ENCODE measurements at regions of chr6 and their contacts with region 1.

Region 1: DNA sequence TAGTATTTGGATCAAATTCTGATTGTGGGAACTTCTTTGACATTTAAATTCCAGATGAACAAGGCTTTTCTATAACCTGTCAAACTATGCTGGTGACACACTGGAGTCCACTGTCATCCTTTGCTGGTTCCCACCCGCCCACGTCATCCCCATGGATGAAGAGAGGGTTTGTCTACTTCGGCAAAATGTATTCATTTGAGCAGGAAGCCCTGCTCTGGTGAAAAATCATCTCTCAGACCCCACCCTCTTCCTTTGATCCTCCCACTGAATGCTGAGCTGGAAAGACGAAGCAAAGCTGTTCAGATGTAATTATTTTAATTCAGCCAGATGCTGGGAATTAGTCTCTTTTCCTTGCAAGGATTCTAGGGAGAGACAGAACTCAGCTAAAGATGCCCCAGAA is 50.5 kb downstream of the CPNE5 start:
- DNase-seq: peak in 1 of 2 donors; percentile 21
- ATAC-seq: no peak
- H3K4me3 ChIP-seq: no peak overlapping the region
- H3K4me3 Mint-ChIP-seq: no peak overlapping the region
- H3K27ac ChIP-seq: no peak overlapping the region
- H3K27ac Mint-ChIP-seq: no peak overlapping the region
- H3K4me1 ChIP-seq: no peaks in the 10 kb centered on the region
- H3K4me1 Mint-ChIP-seq: no peaks in the 10 kb centered on the region
- H3K27me3 ChIP-seq: no peaks in the 10 kb centered on the region
- H3K27me3 Mint-ChIP-seq: peaks cover 6 to 8% of the 10 kb centered on the region in 2 donors
- CTCF ChIP-seq: no peak

Region 2: GRCh38 chr6:36615018-36615761 is 173.6 kb before region 1 on chr6:
- intact Hi-C with region 1: loop called (anchors 10 kb)
- DNase-seq: peak; percentile 34 to 80
- ATAC-seq: peak; percentile 76 to 92 (median 85)
- H3K4me3 ChIP-seq: no peak overlapping the region
- H3K4me3 Mint-ChIP-seq: no peak overlapping the region
- H3K27ac ChIP-seq: peak overlapping the region; percentile 53
- H3K27ac Mint-ChIP-seq: peak overlapping the region; percentile 74 to 88
- H3K4me1 ChIP-seq: peaks cover 14% of the 10 kb centered on the region
- H3K4me1 Mint-ChIP-seq: peaks cover 15 to 22% of the 10 kb centered on the region in 2 donors
- H3K27me3 ChIP-seq: no peaks in the 10 kb centered on the region
- H3K27me3 Mint-ChIP-seq: no peaks in the 10 kb centered on the region
- CTCF ChIP-seq: peak; percentile 75

Region 3: GRCh38 chr6:36858407-36858981 is 69.7 kb after region 1 on chr6:
- intact Hi-C with region 1: no loop called
- DNase-seq: no peak
- ATAC-seq: no peak
- H3K4me3 ChIP-seq: no peak overlapping the region
- H3K4me3 Mint-ChIP-seq: no peak overlapping the region
- H3K27ac ChIP-seq: no peak overlapping the region
- H3K27ac Mint-ChIP-seq: no peak overlapping the region
- H3K4me1 ChIP-seq: no peaks in the 10 kb centered on the region
- H3K4me1 Mint-ChIP-seq: peaks cover 4 to 11% of the 10 kb centered on the region in 2 donors
- H3K27me3 ChIP-seq: no peaks in the 10 kb centered on the region
- H3K27me3 Mint-ChIP-seq: no peaks in the 10 kb centered on the region
- CTCF ChIP-seq: no peak